ENCODE measurements at regions of chr9 and their contacts with region 1.

Region 1: DNA sequence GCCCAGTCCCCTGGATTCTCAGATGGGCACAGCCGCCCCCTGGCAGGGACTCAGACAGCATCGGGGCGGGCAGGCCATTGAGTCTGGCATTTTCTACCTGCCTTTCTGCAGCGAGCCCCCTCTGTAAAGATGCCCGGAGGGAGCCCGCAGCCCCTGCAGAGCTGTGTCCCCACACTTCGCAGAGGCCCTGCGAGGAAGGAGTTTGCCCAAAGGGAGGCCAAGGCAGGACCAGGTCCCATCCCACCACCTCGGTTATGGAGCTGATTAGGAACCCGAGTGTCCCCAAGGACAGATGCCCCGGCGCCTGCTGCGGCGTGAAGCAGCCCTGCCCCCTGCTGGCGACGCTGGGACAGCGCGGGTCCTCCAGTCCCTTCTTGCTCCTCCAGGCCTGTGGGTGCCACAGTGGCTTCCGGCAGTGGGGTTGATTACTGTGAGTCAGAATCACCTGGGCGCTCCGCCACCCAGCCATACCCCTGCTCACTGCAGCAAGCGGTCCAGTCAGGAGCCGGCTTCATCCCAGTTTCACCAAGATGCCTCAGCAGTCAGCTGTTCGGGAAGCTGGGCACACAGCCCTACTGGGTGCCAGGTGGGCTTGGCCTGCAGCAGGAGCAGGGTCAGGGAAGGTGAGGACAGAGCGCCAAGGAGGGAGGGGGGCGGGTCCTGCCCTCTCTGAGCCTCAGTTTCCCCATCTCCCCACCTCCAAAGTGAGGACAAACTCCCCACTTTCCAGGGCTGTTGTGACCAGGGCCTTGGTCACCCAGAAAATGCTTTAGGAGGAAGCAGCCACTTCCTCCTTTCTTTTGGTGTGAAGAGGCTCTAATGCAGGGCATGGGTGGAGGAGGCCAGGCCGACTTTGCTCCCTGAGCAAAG is 117.1 kb downstream of the RXRA start:
- DNase-seq: peak; percentile 93
- H3K4me3 Mint-ChIP-seq: no peak overlapping the region
- H3K27ac Mint-ChIP-seq: peak overlapping the region; percentile 44
- H3K4me1 Mint-ChIP-seq: peaks cover 17% of the 10 kb centered on the region
- H3K27me3 Mint-ChIP-seq: peaks cover 13% of the 10 kb centered on the region

Region 2: GRCh38 chr9:133782157-133783130 is 661.0 kb before region 1 on chr9:
- CTCF ChIA-PET with region 1: no interaction called
- POLR2A ChIA-PET with region 1: no interaction called
- DNase-seq: peak; percentile 69
- H3K4me3 Mint-ChIP-seq: no peak overlapping the region
- H3K27ac Mint-ChIP-seq: no peak overlapping the region
- H3K4me1 Mint-ChIP-seq: peaks cover 10% of the 10 kb centered on the region
- H3K27me3 Mint-ChIP-seq: no peaks in the 10 kb centered on the region

Region 3: GRCh38 chr9:134171316-134172197 is 271.8 kb before region 1 on chr9:
- CTCF ChIA-PET with region 1: interaction called, 46 read pairs
- POLR2A ChIA-PET with region 1: interaction called, 4 read pairs
- DNase-seq: no peak
- H3K4me3 Mint-ChIP-seq: no peak overlapping the region
- H3K27ac Mint-ChIP-seq: no peak overlapping the region
- H3K4me1 Mint-ChIP-seq: peaks cover under 1% of the 10 kb centered on the region
- H3K27me3 Mint-ChIP-seq: peaks cover 2% of the 10 kb centered on the region

Region 4: GRCh38 chr9:134326724-134327601 is 116.4 kb before region 1 on chr9:
- CTCF ChIA-PET with region 1: interaction called, 11 read pairs
- POLR2A ChIA-PET with region 1: no interaction called
- DNase-seq: no peak
- H3K4me3 Mint-ChIP-seq: no peak overlapping the region
- H3K27ac Mint-ChIP-seq: no peak overlapping the region
- H3K4me1 Mint-ChIP-seq: peaks cover 9% of the 10 kb centered on the region
- H3K27me3 Mint-ChIP-seq: peaks cover 38% of the 10 kb centered on the region

Measured in activated CD4-positive, alpha-beta memory T cell treated with anti-CD3 and anti-CD28 coated beads, Interleukin-2, amount 10 ng/mL, durations not matched to agents 7 days and 5 days (primary cell).